Activated naive CD4-positive, alpha-beta T cell treated with anti-CD3 and anti-CD28 coated beads, Interleukin-2, amount 10 ng/mL, durations not matched to agents 7 days and 5 days (primary cell): ENCODE measurements at regions of chr16 and their contacts with region 1.

Region 1: DNA sequence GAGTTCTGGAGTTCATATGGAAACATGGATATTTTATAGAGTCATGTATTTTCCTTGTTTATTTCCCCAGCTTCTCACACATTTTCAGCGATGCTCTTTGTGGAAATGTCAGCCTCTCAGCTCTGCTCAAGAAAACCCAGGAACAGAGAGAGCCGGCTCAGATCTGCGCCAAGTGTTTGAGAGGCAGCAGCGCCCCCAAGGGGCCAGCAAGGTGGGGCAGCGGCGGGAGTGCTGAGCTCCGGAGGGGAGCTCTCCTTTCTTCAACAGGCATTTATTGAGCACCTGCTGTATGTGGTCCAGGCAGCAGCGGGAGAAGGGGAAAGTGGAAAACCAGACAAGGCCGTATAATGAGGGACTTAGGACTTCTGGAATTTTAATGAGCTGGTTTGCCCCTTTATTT is 421.1 kb upstream of the C16orf82 start:
- DNase-seq: peak; percentile 74
- H3K4me3 Mint-ChIP-seq: no peak overlapping the region
- H3K27ac Mint-ChIP-seq: no peak overlapping the region
- H3K4me1 Mint-ChIP-seq: peaks cover 34% of the 10 kb centered on the region
- H3K27me3 Mint-ChIP-seq: peaks cover 18% of the 10 kb centered on the region

Region 2: DNA sequence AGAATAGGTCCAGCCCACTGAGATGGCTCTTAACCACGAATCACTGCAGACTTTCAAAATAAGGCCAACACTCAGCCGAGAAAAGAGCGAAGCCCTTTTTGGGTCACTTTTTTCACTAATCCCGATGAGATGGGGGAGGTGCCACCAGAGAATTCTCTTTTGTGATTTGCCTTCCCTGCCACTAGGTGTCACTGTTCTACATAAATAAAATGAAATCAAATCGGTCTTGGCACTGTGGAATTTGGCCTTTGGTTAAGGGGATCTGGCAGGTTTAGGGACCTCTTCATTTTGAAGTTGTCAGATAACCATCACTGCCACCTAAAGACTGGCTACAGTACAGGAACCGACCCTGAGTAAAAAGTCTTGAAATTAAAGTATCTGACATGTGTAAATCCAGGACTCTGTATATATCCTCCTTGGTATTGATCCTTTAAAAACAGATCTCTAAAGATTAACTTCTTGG is 806.9 kb before region 1 on chr16:
- CTCF ChIA-PET with region 1: interaction called, 18 read pairs
- DNase-seq: peak; percentile 36
- H3K4me3 Mint-ChIP-seq: no peak overlapping the region
- H3K27ac Mint-ChIP-seq: no peak overlapping the region
- H3K4me1 Mint-ChIP-seq: peaks cover 4% of the 10 kb centered on the region
- H3K27me3 Mint-ChIP-seq: peaks cover 11% of the 10 kb centered on the region

Region 3: GRCh38 chr16:26430618-26431017 is 215.0 kb before region 1 on chr16:
- CTCF ChIA-PET with region 1: no interaction called
- DNase-seq: no peak
- H3K4me3 Mint-ChIP-seq: no peak overlapping the region
- H3K27ac Mint-ChIP-seq: no peak overlapping the region
- H3K4me1 Mint-ChIP-seq: no peaks in the 10 kb centered on the region
- H3K27me3 Mint-ChIP-seq: no peaks in the 10 kb centered on the region

Region 4: GRCh38 chr16:26453215-26453614 is 192.4 kb before region 1 on chr16:
- CTCF ChIA-PET with region 1: interaction called, 13 read pairs
- DNase-seq: no peak
- H3K4me3 Mint-ChIP-seq: no peak overlapping the region
- H3K27ac Mint-ChIP-seq: no peak overlapping the region
- H3K4me1 Mint-ChIP-seq: no peaks in the 10 kb centered on the region
- H3K27me3 Mint-ChIP-seq: no peaks in the 10 kb centered on the region

Region 5: DNA sequence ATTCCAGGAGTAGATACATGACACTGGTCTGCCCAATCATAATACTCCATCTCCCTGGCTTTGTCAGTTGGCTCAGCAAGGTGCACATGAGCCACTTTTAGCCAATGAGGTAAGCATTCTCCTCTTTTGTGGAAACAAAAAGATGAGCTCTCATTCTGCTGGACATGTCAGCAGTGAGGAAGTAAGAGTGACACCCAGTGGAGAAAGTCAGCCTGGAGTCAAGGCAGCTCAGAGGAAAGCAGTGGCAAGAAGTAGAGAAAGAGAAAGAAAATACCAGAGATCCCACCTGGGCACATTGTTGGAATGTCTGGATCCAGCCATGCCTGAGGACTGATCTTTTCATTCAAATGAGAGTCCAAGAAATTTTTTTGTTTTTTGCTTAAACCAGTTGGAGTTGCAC is 75.8 kb before region 1 on chr16:
- CTCF ChIA-PET with region 1: interaction called, 31 read pairs
- DNase-seq: peak; percentile 37
- H3K4me3 Mint-ChIP-seq: no peak overlapping the region
- H3K27ac Mint-ChIP-seq: no peak overlapping the region
- H3K4me1 Mint-ChIP-seq: peaks cover 4% of the 10 kb centered on the region
- H3K27me3 Mint-ChIP-seq: peaks cover 40% of the 10 kb centered on the region

Region 6: DNA sequence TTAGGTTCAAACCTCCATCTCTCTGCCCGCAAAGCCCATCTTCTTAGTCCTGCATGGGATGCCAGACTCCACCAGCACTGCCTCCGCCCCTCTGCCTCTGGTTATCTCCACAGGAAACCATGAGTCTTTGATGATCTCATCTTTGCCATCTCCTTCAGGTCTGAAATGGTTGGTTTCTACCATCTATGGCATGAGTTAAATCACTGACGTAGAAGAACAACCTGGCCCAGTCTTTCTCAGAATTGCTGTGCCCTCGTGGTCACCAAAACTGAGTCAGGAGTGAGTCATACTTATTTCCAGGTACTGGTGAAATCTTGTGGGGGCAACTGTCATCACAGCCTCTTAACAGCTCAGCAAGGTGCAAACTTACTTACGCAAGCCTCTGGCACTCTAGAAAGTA is 47.6 kb before region 1 on chr16:
- CTCF ChIA-PET with region 1: interaction called, 14 read pairs
- DNase-seq: peak; percentile 86
- H3K4me3 Mint-ChIP-seq: no peak overlapping the region
- H3K27ac Mint-ChIP-seq: peak overlapping the region; percentile 88
- H3K4me1 Mint-ChIP-seq: peaks cover 89% of the 10 kb centered on the region
- H3K27me3 Mint-ChIP-seq: peaks cover 8% of the 10 kb centered on the region

Region 7: GRCh38 chr16:26605626-26606271 is 39.9 kb before region 1 on chr16:
- CTCF ChIA-PET with region 1: interaction called, 14 read pairs
- DNase-seq: no peak
- H3K4me3 Mint-ChIP-seq: no peak overlapping the region
- H3K27ac Mint-ChIP-seq: peak overlapping the region; percentile 87
- H3K4me1 Mint-ChIP-seq: peaks cover 71% of the 10 kb centered on the region
- H3K27me3 Mint-ChIP-seq: peaks cover 17% of the 10 kb centered on the region